Calu3 (cell line): ENCODE measurements at regions of chr3 and their contacts with region 1.

Region 1: DNA sequence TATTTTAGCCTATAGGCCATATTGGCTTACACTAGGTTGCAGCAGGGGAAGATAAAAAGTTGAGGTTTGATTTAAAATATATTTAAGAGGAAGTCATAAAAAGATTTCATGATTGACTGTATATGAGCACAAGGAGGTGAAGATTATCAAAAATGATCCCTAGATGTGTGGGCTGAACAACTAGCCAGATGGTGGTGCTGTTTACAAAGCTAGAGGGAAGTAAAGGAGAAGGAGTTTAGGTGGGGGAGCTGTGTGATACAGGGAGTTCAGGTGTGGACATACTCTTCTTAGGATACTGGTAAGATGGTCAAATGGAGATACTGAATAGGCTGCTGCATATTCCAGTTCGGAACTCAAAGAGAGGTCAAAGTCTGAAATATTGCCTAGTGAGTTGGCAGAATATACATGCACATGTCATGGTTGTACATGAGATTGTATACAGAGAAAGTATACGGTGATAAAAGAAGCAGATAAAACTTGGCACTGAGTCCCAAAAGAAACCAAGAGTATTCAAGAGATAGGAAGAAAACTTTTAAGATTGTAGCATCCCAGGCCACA is 727.8 kb downstream of the NLGN1 start:
- DNase-seq: peak; percentile 45
- H3K4me3 Mint-ChIP-seq: no peak overlapping the region
- H3K27ac Mint-ChIP-seq: no peak overlapping the region
- H3K4me1 Mint-ChIP-seq: peaks cover 25% of the 10 kb centered on the region
- H3K27me3 Mint-ChIP-seq: no peaks in the 10 kb centered on the region
- CTCF ChIP-seq: peak; percentile 80

Region 2: DNA sequence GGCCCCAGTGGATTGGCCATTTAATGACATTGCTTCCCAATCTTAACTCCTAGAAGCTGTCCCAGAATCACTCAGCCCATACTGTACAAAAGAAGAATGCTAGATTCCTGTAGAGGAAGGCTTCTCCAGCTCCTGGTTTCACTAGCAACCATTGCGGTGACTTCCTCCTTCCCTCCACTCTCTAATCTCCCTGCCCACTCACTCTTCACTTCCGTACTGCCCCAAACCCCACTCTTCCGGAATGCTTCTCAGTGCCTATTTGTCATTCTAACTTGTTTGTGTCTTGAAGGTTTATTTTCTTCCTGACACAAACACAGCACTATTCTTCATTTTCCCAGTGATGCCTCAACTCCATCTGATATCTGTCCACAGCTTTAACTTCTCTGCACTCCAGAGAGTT is 887.3 kb before region 1 on chr3:
- CTCF ChIA-PET with region 1: no interaction called
- intact Hi-C with region 1: no loop called
- DNase-seq: no peak
- H3K4me3 Mint-ChIP-seq: no peak overlapping the region
- H3K27ac Mint-ChIP-seq: no peak overlapping the region
- H3K4me1 Mint-ChIP-seq: no peaks in the 10 kb centered on the region
- H3K27me3 Mint-ChIP-seq: no peaks in the 10 kb centered on the region
- CTCF ChIP-seq: no peak

Region 3: DNA sequence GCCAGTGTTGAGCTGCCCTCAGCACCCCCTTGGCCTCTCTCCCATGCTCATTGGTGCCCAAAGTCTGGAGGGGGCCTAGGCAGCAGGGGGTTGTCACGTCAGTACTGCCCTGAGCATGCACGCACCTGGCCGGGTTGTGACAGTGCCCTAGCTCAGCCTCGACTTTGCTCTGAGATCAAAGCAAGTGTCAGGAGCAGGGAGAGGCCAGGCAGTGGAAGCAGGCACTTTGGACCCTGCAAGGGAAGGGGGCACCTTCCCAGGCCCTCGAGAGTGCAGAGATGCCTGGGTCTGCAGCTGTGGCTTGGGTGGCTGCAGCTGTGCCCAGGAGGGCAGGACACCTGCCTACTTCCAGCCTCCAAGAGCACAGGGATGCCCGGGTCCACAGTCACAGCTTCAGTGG is 166.5 kb before region 1 on chr3:
- CTCF ChIA-PET with region 1: no interaction called
- intact Hi-C with region 1: no loop called
- DNase-seq: no peak
- H3K4me3 Mint-ChIP-seq: no peak overlapping the region
- H3K27ac Mint-ChIP-seq: no peak overlapping the region
- H3K4me1 Mint-ChIP-seq: no peaks in the 10 kb centered on the region
- H3K27me3 Mint-ChIP-seq: no peaks in the 10 kb centered on the region
- CTCF ChIP-seq: no peak

Region 4: GRCh38 chr3:173993299-173993698 is 132.0 kb before region 1 on chr3:
- CTCF ChIA-PET with region 1: no interaction called
- intact Hi-C with region 1: loop called (anchors 1 kb)
- DNase-seq: no peak
- H3K4me3 Mint-ChIP-seq: no peak overlapping the region
- H3K27ac Mint-ChIP-seq: no peak overlapping the region
- H3K4me1 Mint-ChIP-seq: no peaks in the 10 kb centered on the region
- H3K27me3 Mint-ChIP-seq: no peaks in the 10 kb centered on the region
- CTCF ChIP-seq: peak; percentile 61

Region 5: GRCh38 chr3:174355505-174355904 is 230.2 kb after region 1 on chr3:
- CTCF ChIA-PET with region 1: no interaction called
- intact Hi-C with region 1: loop called (anchors 5 kb)
- DNase-seq: peak; percentile 23
- H3K4me3 Mint-ChIP-seq: no peak overlapping the region
- H3K27ac Mint-ChIP-seq: no peak overlapping the region
- H3K4me1 Mint-ChIP-seq: no peaks in the 10 kb centered on the region
- H3K27me3 Mint-ChIP-seq: no peaks in the 10 kb centered on the region
- CTCF ChIP-seq: peak; percentile 62

Region 6: DNA sequence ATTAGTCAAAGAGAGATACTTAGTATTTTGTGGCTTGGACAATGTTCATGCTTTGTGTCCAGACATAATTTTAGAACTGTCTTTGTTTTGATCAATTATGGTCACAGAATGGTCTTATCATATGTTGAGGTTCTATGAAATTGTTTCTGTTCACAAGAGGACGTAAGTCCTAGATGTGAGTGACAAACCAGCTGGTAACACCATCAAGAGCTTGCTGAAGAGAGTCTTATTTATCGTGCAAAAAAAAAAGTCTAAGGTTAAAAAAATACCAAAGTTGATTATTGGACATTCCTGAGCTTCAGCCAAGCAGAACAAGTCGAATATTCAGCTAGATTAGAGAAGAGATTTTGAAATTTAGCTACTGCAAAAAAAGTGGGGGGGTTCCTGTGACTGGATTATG is 237.9 kb after region 1 on chr3:
- CTCF ChIA-PET with region 1: interaction called, 10 read pairs
- intact Hi-C with region 1: loop called (anchors 5 kb)
- DNase-seq: no peak
- H3K4me3 Mint-ChIP-seq: no peak overlapping the region
- H3K27ac Mint-ChIP-seq: no peak overlapping the region
- H3K4me1 Mint-ChIP-seq: peaks cover 7% of the 10 kb centered on the region
- H3K27me3 Mint-ChIP-seq: no peaks in the 10 kb centered on the region
- CTCF ChIP-seq: no peak

Region 7: DNA sequence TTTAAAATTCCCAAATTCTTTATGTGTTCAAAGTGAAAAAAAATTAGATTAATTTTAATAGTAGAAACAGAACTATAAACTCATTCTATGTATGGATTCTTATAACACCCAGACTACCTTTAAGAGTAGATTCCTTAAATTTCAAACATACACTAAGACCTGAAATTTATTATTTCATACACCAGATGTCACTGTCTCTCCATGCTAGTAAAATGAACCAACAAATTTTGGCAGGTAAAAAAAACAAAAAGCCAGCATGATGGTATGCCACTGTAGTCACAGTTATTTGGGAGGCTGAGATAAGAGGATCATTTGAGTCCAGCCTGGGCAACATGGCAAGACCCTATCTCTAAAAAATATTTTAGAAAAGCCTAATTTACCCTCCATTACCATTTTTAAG is 272.5 kb after region 1 on chr3:
- CTCF ChIA-PET with region 1: interaction called, 3 read pairs
- intact Hi-C with region 1: loop called (anchors 10 kb)
- DNase-seq: no peak
- H3K4me3 Mint-ChIP-seq: no peak overlapping the region
- H3K27ac Mint-ChIP-seq: no peak overlapping the region
- H3K4me1 Mint-ChIP-seq: no peaks in the 10 kb centered on the region
- H3K27me3 Mint-ChIP-seq: no peaks in the 10 kb centered on the region
- CTCF ChIP-seq: peak; percentile 64

Region 8: GRCh38 chr3:174529290-174529689 is 403.9 kb after region 1 on chr3:
- CTCF ChIA-PET with region 1: no interaction called
- intact Hi-C with region 1: no loop called
- DNase-seq: no peak
- H3K4me3 Mint-ChIP-seq: no peak overlapping the region
- H3K27ac Mint-ChIP-seq: no peak overlapping the region
- H3K4me1 Mint-ChIP-seq: peaks cover 41% of the 10 kb centered on the region
- H3K27me3 Mint-ChIP-seq: no peaks in the 10 kb centered on the region
- CTCF ChIP-seq: no peak

Region 9: GRCh38 chr3:174620138-174620537 is 494.8 kb after region 1 on chr3:
- CTCF ChIA-PET with region 1: no interaction called
- intact Hi-C with region 1: loop called (anchors 5 kb)
- DNase-seq: no peak
- H3K4me3 Mint-ChIP-seq: no peak overlapping the region
- H3K27ac Mint-ChIP-seq: no peak overlapping the region
- H3K4me1 Mint-ChIP-seq: no peaks in the 10 kb centered on the region
- H3K27me3 Mint-ChIP-seq: no peaks in the 10 kb centered on the region
- CTCF ChIP-seq: no peak